OCI-LY7 (cell line): ENCODE measurements at regions of chr6 and their contacts with region 1.

Region 1: DNA sequence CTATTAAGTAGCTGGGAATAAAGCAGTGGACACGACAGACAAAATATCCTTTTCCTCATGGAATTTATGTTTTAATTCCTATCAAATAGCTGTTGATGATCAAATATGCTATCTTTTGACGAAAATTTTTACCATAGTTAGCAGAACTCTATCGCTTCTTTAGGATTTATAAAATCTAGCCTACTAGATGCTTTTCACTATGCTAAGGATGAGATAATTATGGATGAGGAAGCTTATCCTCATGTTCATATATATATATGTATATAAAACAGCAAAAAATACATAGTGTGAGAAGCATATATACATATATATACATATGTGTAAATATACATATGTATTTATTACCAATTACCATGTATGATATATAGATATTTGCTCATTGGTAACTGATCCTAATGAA is 12.9 kb upstream of the PRSS16 start:
- DNase-seq: no peak
- H3K4me3 ChIP-seq: no peak overlapping the region
- H3K27ac ChIP-seq: no peak overlapping the region
- H3K4me1 ChIP-seq: no peaks in the 10 kb centered on the region
- CTCF ChIP-seq: no peak

Region 2: DNA sequence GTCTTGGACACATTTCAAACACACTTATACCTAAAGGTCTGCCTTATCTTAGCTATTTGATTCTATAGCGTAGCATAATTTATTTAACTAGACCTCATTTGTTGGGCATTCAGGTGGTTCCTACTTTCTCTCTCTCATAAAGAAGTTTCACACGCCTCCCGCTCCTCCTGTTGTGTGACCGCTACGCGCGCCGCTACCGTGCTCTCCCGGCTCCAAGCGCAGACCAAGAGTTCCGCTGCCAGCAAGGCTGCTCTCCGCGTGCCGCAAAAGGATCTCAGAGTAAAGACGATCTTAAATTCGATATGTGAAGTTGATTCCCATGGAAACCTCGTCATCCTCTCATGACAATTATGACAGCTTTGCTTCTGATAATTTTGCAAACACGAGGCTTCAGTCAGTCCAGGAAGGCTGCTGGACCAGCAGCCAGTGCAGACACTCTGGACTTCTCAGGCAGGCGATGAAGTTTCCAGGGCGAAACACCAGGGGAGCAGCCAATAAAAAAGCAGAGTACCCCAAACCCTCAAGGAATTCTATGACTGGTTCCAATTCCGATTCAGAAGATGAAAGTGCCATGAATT is 33.4 kb after region 1 on chr6:
- CTCF ChIA-PET with region 1: no interaction called
- POLR2A ChIA-PET with region 1: no interaction called
- intact Hi-C with region 1: loop called (anchors 2 kb)
- DNase-seq: no peak
- H3K4me3 ChIP-seq: no peak overlapping the region
- H3K27ac ChIP-seq: no peak overlapping the region
- H3K4me1 ChIP-seq: no peaks in the 10 kb centered on the region
- CTCF ChIP-seq: no peak

Region 3: GRCh38 chr6:27531772-27532459 is 297.3 kb after region 1 on chr6:
- CTCF ChIA-PET with region 1: no interaction called
- POLR2A ChIA-PET with region 1: no interaction called
- intact Hi-C with region 1: no loop called
- DNase-seq: no peak
- H3K4me3 ChIP-seq: no peak overlapping the region
- H3K27ac ChIP-seq: no peak overlapping the region
- H3K4me1 ChIP-seq: no peaks in the 10 kb centered on the region
- CTCF ChIP-seq: no peak